ENCODE measurements at regions of chr13 and their contacts with region 1.

Region 1: GRCh38 chr13:96020155-96020575 is 33.0 kb downstream of the UGGT2 start:
- DNase-seq: peak; percentile 23
- H3K4me3 Mint-ChIP-seq: no peak overlapping the region
- H3K27ac Mint-ChIP-seq: no peak overlapping the region
- H3K4me1 Mint-ChIP-seq: no peaks in the 10 kb centered on the region
- H3K27me3 Mint-ChIP-seq: no peaks in the 10 kb centered on the region
- CTCF ChIP-seq: no peak

Region 2: GRCh38 chr13:96229356-96229755 is 209.2 kb after region 1 on chr13:
- CTCF ChIA-PET with region 1: interaction called, 6 read pairs
- intact Hi-C with region 1: loop called (anchors 1 kb)
- DNase-seq: no peak
- H3K4me3 Mint-ChIP-seq: no peak overlapping the region
- H3K27ac Mint-ChIP-seq: no peak overlapping the region
- H3K4me1 Mint-ChIP-seq: no peaks in the 10 kb centered on the region
- H3K27me3 Mint-ChIP-seq: no peaks in the 10 kb centered on the region
- CTCF ChIP-seq: no peak

Region 3: GRCh38 chr13:96817336-96817941 is 797.3 kb after region 1 on chr13:
- CTCF ChIA-PET with region 1: interaction called, 8 read pairs
- intact Hi-C with region 1: loop called (anchors 2 kb)
- DNase-seq: no peak
- H3K4me3 Mint-ChIP-seq: no peak overlapping the region
- H3K27ac Mint-ChIP-seq: no peak overlapping the region
- H3K4me1 Mint-ChIP-seq: no peaks in the 10 kb centered on the region
- H3K27me3 Mint-ChIP-seq: no peaks in the 10 kb centered on the region
- CTCF ChIP-seq: no peak

Region 4: DNA sequence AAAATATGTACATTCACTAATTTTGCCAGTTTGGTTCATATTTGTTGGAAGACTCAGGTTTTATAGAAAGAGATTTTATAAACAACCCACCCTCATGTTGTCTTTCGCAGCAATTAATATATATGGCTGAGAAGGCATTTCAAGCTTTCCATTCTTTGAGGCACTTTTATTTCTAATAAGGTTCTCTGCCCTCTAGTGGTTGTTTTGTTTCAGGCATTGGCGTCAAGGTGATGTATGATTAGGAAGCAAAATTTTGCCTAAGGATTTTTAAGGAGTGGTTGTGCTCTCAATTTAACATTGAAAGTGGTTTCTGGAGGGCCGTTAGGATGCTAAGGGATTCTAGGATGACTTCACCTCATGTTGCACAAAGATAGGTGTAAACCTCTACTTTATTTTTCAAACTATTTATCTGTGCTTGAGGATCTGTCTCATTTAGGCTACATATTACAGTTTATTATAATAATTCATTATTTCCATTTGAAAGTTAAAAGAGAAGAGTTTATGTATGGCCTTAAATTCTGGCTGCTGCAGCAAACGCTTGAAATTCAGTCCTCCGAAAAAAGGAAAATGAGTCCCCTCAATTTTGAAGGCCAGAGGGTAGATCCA is 938.2 kb after region 1 on chr13:
- CTCF ChIA-PET with region 1: no interaction called
- intact Hi-C with region 1: loop called (anchors 2 kb)
- DNase-seq: no peak
- H3K4me3 Mint-ChIP-seq: no peak overlapping the region
- H3K27ac Mint-ChIP-seq: no peak overlapping the region
- H3K4me1 Mint-ChIP-seq: no peaks in the 10 kb centered on the region
- H3K27me3 Mint-ChIP-seq: no peaks in the 10 kb centered on the region
- CTCF ChIP-seq: no peak

Region 5: DNA sequence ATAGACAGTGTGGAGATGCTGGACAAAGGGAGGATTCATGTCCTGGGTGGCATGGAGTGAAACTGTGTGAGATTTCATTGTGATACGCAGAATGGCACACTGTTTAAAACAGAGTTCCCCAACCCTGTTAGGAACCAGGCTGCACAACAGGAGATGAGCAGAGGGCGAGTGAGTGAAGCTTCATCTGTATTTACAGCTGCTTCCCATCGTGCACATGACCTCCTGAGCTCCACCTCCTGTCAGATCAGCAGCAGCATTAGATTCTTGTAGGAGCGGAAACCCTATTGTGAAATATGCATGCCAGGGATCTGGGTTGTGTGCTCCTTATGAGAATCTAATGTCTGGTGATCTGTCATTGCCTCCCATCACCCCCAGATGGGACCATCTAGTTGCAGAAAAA is 1486.3 kb after region 1 on chr13:
- CTCF ChIA-PET with region 1: no interaction called
- intact Hi-C with region 1: no loop called
- DNase-seq: no peak
- H3K4me3 Mint-ChIP-seq: no peak overlapping the region
- H3K27ac Mint-ChIP-seq: no peak overlapping the region
- H3K4me1 Mint-ChIP-seq: no peaks in the 10 kb centered on the region
- H3K27me3 Mint-ChIP-seq: peaks cover 11% of the 10 kb centered on the region
- CTCF ChIP-seq: no peak

Measured in Calu3 (cell line).